Activated CD4-positive, alpha-beta memory T cell treated with anti-CD3 and anti-CD28 coated beads, Interleukin-2, amount 10 ng/mL, durations not matched to agents 7 days and 5 days (primary cell): ENCODE measurements at regions of chr1 and their contacts with region 1.

Region 1: DNA sequence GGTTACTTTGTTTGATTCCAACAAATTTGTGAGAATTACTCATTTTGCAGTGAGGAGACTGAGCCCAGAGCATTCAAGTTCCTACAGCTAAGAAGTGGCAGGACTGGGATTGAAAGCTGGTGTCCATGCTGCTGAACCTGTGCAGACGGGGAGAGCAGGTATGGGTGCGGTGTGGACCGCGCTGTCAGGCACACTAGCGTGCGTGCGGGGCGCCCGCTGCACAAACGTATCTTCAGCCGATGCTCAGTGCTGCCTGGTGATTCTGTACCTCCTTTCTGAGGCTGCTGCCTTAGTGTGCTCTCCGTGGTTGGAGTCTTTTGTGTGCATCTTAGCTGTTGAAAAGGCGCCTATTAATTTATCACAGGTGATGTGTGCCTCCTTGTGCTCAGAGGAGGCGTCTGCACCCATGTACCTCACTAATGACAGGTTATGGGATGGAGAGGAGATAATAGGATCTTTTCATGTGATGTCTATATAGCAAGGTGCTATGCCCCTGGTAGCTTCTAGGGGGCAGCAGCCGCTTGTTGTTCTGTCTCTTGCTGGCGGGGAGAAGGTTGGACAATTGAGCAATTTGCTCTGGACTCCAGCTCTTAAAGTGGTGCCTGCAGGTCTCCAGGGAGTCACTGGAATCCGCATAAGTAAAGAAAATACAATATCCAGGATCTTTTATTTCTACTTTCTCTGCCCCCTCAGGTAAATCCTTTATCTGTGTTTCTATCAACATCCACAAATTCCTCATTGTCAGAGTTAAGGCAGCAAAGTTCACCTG is 32.5 kb downstream of the PEX14 start:
- DNase-seq: peak; percentile 69
- H3K4me3 Mint-ChIP-seq: no peak overlapping the region
- H3K27ac Mint-ChIP-seq: peak overlapping the region; percentile 48
- H3K4me1 Mint-ChIP-seq: peaks cover 49% of the 10 kb centered on the region
- H3K27me3 Mint-ChIP-seq: no peaks in the 10 kb centered on the region

Region 2: GRCh38 chr1:10338047-10338446 is 169.2 kb before region 1 on chr1:
- CTCF ChIA-PET with region 1: no interaction called
- POLR2A ChIA-PET with region 1: no interaction called
- DNase-seq: peak; percentile 46
- H3K4me3 Mint-ChIP-seq: no peak overlapping the region
- H3K27ac Mint-ChIP-seq: no peak overlapping the region
- H3K4me1 Mint-ChIP-seq: no peaks in the 10 kb centered on the region
- H3K27me3 Mint-ChIP-seq: no peaks in the 10 kb centered on the region

Region 3: GRCh38 chr1:10459181-10459580 is 48.1 kb before region 1 on chr1:
- CTCF ChIA-PET with region 1: no interaction called
- POLR2A ChIA-PET with region 1: no interaction called
- DNase-seq: no peak
- H3K4me3 Mint-ChIP-seq: no peak overlapping the region
- H3K27ac Mint-ChIP-seq: no peak overlapping the region
- H3K4me1 Mint-ChIP-seq: peaks cover 12% of the 10 kb centered on the region
- H3K27me3 Mint-ChIP-seq: no peaks in the 10 kb centered on the region

Region 4: GRCh38 chr1:10522322-10522860 is 15.1 kb after region 1 on chr1:
- CTCF ChIA-PET with region 1: interaction called, 26 read pairs
- POLR2A ChIA-PET with region 1: interaction called, 12 read pairs
- DNase-seq: no peak
- H3K4me3 Mint-ChIP-seq: no peak overlapping the region
- H3K27ac Mint-ChIP-seq: no peak overlapping the region
- H3K4me1 Mint-ChIP-seq: peaks cover 32% of the 10 kb centered on the region
- H3K27me3 Mint-ChIP-seq: no peaks in the 10 kb centered on the region

Region 5: DNA sequence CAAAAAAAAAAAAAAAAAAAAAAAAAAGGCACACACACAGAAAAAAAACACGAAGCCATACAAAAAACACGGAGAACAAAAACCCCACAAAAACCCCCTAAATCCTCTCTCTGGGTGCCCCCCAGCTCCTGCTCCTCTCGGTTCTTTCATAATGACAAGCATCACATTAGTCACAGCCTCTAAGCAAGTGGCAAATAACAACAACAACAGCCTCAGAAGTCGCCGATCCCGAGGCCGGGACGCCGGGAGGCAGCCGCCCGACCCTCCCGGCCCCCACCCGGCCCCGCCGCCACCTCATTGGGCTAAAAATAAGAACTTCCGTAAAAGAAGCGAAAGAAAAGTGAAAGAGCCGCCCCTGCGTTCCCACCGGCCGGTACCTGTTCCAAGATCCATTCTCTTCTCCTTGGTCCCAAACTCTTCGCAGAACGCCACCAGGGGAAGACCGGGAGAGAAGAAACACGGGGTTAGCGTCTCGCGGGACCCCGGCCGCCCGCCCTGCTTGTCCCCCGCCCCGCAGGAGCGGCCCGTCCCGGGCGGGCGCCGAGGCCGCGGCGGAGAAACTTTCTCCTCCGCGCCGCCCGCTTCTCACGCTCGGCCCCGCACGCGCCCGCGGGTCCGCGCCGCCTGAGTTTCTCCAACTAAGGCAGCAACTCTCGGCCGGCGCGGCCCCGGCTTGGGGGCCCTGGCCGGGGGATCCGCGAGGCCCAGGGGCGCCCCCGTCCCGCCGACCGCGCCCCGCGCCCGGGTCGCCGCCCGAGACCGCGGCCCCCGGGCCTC is 186.4 kb after region 1 on chr1:
- CTCF ChIA-PET with region 1: interaction called, 10 read pairs
- POLR2A ChIA-PET with region 1: interaction called, 3 read pairs
- DNase-seq: peak; percentile 50
- H3K4me3 Mint-ChIP-seq: peak overlapping the region; percentile 84
- H3K27ac Mint-ChIP-seq: peak overlapping the region; percentile 80
- H3K4me1 Mint-ChIP-seq: peaks cover 26% of the 10 kb centered on the region
- H3K27me3 Mint-ChIP-seq: peaks cover 19% of the 10 kb centered on the region

Region 6: DNA sequence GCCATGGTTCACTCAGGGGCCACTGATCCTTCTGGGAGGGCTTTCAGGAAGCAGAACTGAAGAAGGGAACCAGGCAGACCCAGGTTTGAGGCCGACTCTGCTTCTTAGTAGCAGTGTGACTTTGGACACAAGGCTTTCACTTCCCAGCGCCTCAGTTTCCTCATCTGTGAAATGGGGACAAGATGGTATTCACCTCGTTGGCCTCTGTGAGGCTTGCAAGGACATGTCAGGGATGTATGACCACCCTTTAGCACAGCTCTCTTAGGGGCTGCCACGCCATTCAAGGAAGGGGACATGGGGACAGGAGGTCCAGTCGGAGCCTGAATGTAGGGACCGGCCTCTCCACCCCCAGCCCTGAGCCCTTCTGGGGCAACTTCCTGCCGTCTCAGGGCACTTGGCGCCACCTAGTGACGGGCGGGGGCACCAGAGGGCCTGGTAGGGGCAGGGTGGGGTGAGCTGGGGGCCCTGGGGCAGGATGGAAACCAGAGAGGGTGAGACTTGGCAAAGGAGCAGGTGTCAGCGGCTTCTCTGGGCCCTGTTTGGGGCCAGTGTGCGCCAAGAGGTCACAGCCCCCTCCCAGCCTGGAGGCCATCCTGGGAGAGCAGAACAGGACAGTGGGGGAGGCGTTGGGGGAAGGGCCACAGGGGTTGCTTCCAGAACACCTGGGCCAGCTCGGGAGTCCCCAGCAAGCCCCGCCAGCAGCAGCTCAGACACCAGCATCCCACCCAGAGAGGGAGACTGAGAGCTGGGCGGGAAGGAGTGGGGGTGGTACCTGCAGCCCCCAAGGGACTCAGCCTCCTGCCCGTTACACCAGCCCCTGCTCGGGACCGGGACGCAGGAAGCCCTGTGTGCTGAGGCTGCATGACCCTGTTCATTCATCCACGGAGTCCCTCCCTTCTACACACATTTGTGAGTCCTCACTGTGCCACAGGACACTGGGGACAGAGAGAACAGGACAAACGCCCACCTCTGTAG is 402.7 kb after region 1 on chr1:
- CTCF ChIA-PET with region 1: interaction called, 13 read pairs
- POLR2A ChIA-PET with region 1: no interaction called
- DNase-seq: peak; percentile 74
- H3K4me3 Mint-ChIP-seq: no peak overlapping the region
- H3K27ac Mint-ChIP-seq: no peak overlapping the region
- H3K4me1 Mint-ChIP-seq: peaks cover 1% of the 10 kb centered on the region
- H3K27me3 Mint-ChIP-seq: peaks cover 12% of the 10 kb centered on the region